Ovary (tissue), 10 donors: ENCODE measurements at regions of chr3 and their contacts with region 1.

Region 1: GRCh38 chr3:107328069-107328468 is 49.2 kb upstream of the CCDC54 start:
- DNase-seq: no peak
- H3K4me3 ChIP-seq: no peak overlapping the region
- H3K27ac ChIP-seq: no peak overlapping the region
- H3K4me1 ChIP-seq: no peaks in the 10 kb centered on the region
- H3K27me3 ChIP-seq: no peaks in the 10 kb centered on the region
- CTCF ChIP-seq: no peak
- EP300 ChIP-seq: no peak
- POLR2A ChIP-seq: no peak

Region 2: DNA sequence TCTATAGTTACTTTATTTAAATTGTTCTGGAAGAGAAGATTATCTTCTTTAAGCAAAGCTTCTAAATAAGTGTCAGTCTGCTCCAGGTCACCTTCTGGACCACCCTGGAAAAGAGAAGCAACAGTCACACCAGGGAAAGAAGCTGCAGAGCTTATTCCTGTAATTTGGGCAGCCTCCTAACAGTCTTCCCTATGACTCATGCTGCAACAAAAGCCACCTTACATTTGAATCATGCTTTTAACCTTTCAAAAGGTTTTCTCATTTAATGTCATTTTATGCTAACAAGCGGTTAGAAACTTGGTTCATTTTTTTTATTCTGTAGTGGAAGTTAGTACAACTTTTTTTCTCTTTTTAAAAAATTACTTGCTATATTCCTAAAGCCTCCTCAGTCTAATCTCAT is 1630.9 kb after region 1 on chr3:
- intact Hi-C with region 1: loop called in 1 of 4 experiments (anchors 5 kb)
- DNase-seq: no peak
- H3K4me3 ChIP-seq: no peak overlapping the region
- H3K27ac ChIP-seq: no peak overlapping the region
- H3K4me1 ChIP-seq: peaks cover 3% of the 10 kb centered on the region
- H3K27me3 ChIP-seq: no peaks in the 10 kb centered on the region
- CTCF ChIP-seq: no peak
- EP300 ChIP-seq: no peak
- POLR2A ChIP-seq: no peak